Activated naive CD4-positive, alpha-beta T cell treated with anti-CD3 and anti-CD28 coated beads for 36 hours (primary cell): ENCODE measurements at regions of chr5 and their contacts with region 1.

Region 1: DNA sequence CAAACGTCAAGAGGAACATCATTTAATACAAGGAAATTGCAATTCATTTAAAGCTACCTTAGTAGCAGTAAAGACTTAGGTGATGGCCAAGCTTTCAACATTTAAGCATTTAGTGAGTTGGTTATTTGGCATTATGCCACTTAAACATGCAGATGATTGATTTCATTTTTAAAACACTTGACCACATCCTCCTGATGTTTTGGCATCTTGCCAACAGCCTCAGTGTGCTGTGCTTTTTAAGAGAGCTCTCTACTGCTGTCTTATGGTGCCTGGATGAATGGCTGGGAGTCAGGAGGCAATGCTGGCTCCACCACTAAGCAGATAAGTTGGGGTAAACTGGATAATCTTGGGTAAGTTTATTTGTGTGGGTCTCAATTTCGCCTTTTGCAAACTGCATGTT is 364.5 kb downstream of the MAN2A1 start:
- DNase-seq: peak; percentile 91
- H3K4me3 Mint-ChIP-seq: peak overlapping the region; percentile 12
- H3K27ac Mint-ChIP-seq: peak overlapping the region; percentile 87
- H3K4me1 Mint-ChIP-seq: peaks cover 37% of the 10 kb centered on the region
- H3K27me3 Mint-ChIP-seq: no peaks in the 10 kb centered on the region

Region 2: GRCh38 chr5:109695005-109695926 is 359.0 kb before region 1 on chr5:
- CTCF ChIA-PET with region 1: no interaction called
- intact Hi-C with region 1: loop called (anchors 1 kb)
- DNase-seq: peak; percentile 20
- H3K4me3 Mint-ChIP-seq: no peak overlapping the region
- H3K27ac Mint-ChIP-seq: peak overlapping the region; percentile 62
- H3K4me1 Mint-ChIP-seq: peaks cover 79% of the 10 kb centered on the region
- H3K27me3 Mint-ChIP-seq: no peaks in the 10 kb centered on the region

Region 3: DNA sequence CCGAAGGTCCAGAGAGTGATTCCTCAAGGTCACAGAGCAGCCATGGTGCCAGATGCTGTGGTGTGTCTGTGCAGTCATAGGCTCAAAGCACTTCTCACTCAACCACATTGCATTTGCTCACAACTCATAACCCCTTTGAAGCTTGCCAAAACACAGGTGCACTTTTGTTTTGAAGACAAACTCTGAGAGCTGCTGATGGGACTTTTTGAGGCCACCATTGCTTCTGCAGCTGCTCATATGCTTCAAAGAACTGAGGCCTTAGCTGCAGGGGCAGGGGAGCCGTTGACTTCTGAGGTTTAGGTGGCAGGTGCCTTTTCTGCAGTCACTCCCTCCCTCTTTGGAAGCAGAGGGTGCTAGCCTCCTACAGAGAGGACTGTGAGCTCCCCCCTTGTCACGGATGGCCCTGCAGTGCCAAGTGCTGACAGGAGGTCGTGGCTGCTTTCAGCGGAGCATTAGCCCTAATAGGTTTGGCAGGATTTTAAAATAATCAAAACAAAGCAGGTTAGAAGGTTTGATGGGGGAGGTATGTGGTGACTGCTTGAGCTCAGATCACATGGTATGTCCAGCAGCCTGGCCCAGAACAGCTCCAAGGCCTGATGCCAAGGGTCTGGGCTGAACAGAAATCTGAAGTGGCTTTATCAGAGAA is 132.4 kb before region 1 on chr5:
- CTCF ChIA-PET with region 1: no interaction called
- intact Hi-C with region 1: loop called (anchors 1 kb)
- DNase-seq: peak; percentile 84
- H3K4me3 Mint-ChIP-seq: peak overlapping the region; percentile 55
- H3K27ac Mint-ChIP-seq: peak overlapping the region; percentile 93
- H3K4me1 Mint-ChIP-seq: peaks cover 35% of the 10 kb centered on the region
- H3K27me3 Mint-ChIP-seq: no peaks in the 10 kb centered on the region

Region 4: DNA sequence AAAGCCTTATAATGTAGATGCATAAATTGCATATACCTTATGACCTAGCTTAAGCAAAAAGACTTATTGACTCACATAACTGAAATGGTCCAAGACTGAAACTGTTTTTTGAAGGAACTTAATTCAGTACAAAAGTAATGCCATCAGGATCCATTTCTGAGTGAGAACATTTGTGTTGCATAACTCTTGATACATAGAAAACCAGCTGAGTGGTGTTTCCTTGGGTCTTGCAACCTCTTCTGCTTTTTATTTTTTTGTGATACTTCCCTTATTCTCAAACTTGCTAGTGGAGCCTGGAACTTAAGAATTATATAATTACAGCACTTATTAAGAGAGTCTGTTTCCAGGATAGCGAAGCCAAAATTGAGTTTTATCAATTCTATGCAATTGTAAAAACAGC is 92.5 kb before region 1 on chr5:
- CTCF ChIA-PET with region 1: no interaction called
- intact Hi-C with region 1: loop called (anchors 1 kb)
- DNase-seq: no peak
- H3K4me3 Mint-ChIP-seq: no peak overlapping the region
- H3K27ac Mint-ChIP-seq: no peak overlapping the region
- H3K4me1 Mint-ChIP-seq: peaks cover 27% of the 10 kb centered on the region
- H3K27me3 Mint-ChIP-seq: no peaks in the 10 kb centered on the region

Region 5: GRCh38 chr5:110027527-110028322 is 26.5 kb before region 1 on chr5:
- CTCF ChIA-PET with region 1: no interaction called
- intact Hi-C with region 1: loop called (anchors 1 kb)
- DNase-seq: no peak
- H3K4me3 Mint-ChIP-seq: no peak overlapping the region
- H3K27ac Mint-ChIP-seq: peak overlapping the region; percentile 61
- H3K4me1 Mint-ChIP-seq: peaks cover 30% of the 10 kb centered on the region
- H3K27me3 Mint-ChIP-seq: no peaks in the 10 kb centered on the region

Region 6: DNA sequence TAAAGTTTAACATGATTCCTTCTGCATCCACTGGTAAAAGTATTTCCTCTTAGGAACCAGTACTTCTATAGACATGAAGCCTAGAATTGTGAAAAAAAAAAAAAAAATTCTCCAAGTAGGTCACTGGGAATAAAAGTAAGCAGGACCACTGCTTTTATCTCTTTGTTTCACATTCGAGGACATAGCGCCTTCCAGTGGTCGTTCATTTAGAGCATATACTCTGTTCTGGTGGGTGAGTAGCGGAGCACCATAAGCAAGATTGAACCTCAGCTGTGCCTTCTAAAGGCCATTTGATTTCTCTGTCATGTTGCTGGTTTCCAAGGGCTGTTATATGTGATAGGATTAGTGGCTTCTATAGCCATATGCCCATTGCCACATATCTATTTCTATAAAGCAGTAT is 279.1 kb after region 1 on chr5:
- CTCF ChIA-PET with region 1: no interaction called
- intact Hi-C with region 1: loop called (anchors 2 kb)
- DNase-seq: peak; percentile 58
- H3K4me3 Mint-ChIP-seq: no peak overlapping the region
- H3K27ac Mint-ChIP-seq: no peak overlapping the region
- H3K4me1 Mint-ChIP-seq: no peaks in the 10 kb centered on the region
- H3K27me3 Mint-ChIP-seq: no peaks in the 10 kb centered on the region